ENCODE measurements at regions of chr20 and their contacts with region 1.

Region 1: GRCh38 chr20:45293041-45294002 is 13.3 kb upstream of the RBPJL start:
- DNase-seq: no peak
- H3K4me3 ChIP-seq: peak overlapping the region; percentile 51
- H3K27me3 ChIP-seq: no peaks in the 10 kb centered on the region; the same call in 1 of the 2 replicates
- CTCF ChIP-seq: peak; percentile 99

Region 2: GRCh38 chr20:45020236-45020886 is 273.0 kb before region 1 on chr20:
- CTCF ChIA-PET with region 1: interaction called, 11 read pairs
- POLR2A ChIA-PET with region 1: no interaction called
- DNase-seq: no peak
- H3K4me3 ChIP-seq: no peak overlapping the region
- H3K27me3 ChIP-seq: no peaks in the 10 kb centered on the region
- CTCF ChIP-seq: no peak

Region 3: DNA sequence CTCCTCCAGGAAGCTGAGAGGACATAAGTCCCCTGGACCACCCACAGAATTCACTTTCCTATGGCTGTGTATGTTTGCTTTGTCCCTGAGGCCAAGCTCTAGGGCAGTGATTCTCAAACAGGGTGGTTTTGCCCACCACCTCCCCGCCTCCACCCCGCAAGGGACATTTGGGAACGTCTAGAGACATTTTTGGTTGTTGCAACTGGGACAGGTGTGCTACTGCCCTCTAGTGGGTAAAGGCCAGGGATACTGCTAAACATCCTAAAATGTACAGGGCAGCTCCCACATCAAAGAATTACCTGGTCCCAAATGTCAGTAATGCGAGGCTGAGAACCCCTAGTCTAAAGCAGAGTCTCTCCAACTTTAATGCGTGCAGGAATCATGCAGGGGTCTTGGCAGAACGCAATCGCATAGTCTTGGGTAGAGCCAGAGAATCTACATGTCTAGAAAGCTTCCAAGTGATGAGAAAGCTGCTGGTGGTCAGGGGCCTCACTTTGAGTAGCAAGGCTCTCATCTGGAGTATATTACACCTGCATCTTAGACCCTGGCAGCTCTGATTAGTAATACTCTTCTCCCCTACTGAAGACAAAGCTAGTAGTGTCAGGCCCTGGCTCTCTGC is 197.5 kb before region 1 on chr20:
- CTCF ChIA-PET with region 1: interaction called, 78 read pairs
- POLR2A ChIA-PET with region 1: no interaction called
- DNase-seq: no peak
- H3K4me3 ChIP-seq: no peak overlapping the region
- H3K27me3 ChIP-seq: peaks cover 2% of the 10 kb centered on the region; the same call in 1 of the 2 replicates
- CTCF ChIP-seq: peak; percentile 87

Region 4: GRCh38 chr20:45111799-45112471 is 181.4 kb before region 1 on chr20:
- CTCF ChIA-PET with region 1: interaction called, 21 read pairs
- POLR2A ChIA-PET with region 1: no interaction called
- DNase-seq: no peak
- H3K4me3 ChIP-seq: no peak overlapping the region
- H3K27me3 ChIP-seq: peaks cover 14% of the 10 kb centered on the region
- CTCF ChIP-seq: peak; percentile 62

Region 5: GRCh38 chr20:45311589-45312211 is 18.4 kb after region 1 on chr20:
- CTCF ChIA-PET with region 1: interaction called, 43 read pairs
- POLR2A ChIA-PET with region 1: no interaction called
- DNase-seq: no peak
- H3K4me3 ChIP-seq: no peak overlapping the region
- H3K27me3 ChIP-seq: peaks cover 12% of the 10 kb centered on the region
- CTCF ChIP-seq: peak; percentile 92

Region 6: DNA sequence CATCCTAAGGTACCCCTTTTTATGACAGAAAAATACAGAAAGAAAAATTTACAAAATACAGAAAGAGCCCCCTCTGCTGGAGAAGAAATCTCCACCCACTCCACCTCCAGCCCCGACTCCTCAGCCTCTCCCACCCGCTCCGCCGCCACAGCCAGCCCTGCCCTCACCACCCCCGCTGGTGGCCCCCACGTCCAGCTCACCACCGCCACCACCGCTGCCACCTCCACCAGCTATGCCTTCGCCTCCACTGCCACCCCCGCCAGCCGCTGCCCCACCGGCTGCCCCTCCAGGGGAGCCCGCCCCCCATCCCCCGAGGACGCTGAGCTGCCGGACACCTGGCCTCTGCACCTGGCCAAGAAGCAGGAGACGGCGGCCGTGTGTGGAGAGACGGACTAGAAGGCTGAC is 193.9 kb after region 1 on chr20:
- CTCF ChIA-PET with region 1: no interaction called
- POLR2A ChIA-PET with region 1: no interaction called
- DNase-seq: no peak
- H3K4me3 ChIP-seq: no peak overlapping the region
- H3K27me3 ChIP-seq: peaks cover 9% of the 10 kb centered on the region
- CTCF ChIP-seq: no peak